ENCODE measurements at regions of chr11 and their contacts with region 1.

Region 1: GRCh38 chr11:119334174-119334930 is at the start of gene RNF26:
- DNase-seq: peak; percentile 94 to 97 (median 95)
- H3K4me3 ChIP-seq: peak within 1 kb of the TSS; percentile 80
- H3K27ac ChIP-seq: peak within 1 kb of the TSS; percentile 80 to 81
- H3K4me1 ChIP-seq: peaks cover 8% of the 10 kb centered on the region
- H3K27me3 ChIP-seq: no peaks in the 10 kb centered on the region
- CTCF ChIP-seq: no peak
- EP300 ChIP-seq: no peak
- POLR2A ChIP-seq: peak; percentile 77
- total RNA-seq, gene RNF26: 7.0 to 25.8 (median 22.0) TPM

Region 2: DNA sequence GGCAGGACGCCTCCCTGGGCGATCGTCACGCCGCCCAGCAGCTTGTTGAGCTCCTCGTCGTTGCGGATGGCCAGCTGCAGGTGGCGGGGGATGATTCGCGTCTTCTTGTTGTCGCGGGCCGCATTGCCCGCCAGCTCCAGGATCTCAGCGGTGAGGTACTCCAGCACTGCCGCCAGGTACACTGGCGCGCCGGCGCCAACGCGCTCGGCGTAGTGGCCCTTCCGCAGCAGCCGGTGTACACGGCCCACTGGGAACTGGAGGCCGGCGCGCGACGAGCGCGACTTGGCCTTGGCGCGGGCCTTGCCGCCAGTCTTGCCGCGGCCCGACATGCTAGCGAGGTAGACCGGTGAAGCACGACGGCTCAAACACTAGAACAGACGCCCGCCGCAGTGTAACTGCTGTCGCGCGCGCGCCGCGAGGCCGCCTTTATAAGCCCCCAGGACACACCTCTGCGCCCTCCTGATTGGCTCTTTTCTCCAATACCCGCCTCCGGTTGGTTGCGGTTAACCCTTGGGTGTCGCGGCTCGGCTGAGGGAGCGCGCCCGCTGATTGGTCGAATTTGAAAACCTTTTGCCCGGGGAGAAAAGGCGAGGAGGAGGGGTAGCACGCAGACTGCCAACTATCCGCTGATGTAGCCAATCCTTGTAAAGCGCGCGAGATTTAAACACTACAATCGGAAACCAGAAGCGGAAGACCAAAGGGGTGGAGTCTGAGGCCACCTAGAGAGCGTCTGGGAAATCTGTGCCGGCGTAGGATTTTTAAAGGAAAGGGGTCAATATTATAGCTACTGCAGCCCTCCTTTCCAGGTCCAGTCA is 239.1 kb before region 1 on chr11:
- intact Hi-C with region 1: loop called in 1 of 4 experiments (anchors 10 kb)
- DNase-seq: peak; percentile 98 to 99 (median 99)
- H3K4me3 ChIP-seq: peak overlapping the region; percentile 92
- H3K27ac ChIP-seq: peak overlapping the region; percentile 80 to 96
- H3K4me1 ChIP-seq: peaks cover 2% of the 10 kb centered on the region
- H3K27me3 ChIP-seq: no peaks in the 10 kb centered on the region
- CTCF ChIP-seq: peak in 2 of 3 donors; percentile 70 to 85
- EP300 ChIP-seq: no peak
- POLR2A ChIP-seq: peak; percentile 99

Region 3: DNA sequence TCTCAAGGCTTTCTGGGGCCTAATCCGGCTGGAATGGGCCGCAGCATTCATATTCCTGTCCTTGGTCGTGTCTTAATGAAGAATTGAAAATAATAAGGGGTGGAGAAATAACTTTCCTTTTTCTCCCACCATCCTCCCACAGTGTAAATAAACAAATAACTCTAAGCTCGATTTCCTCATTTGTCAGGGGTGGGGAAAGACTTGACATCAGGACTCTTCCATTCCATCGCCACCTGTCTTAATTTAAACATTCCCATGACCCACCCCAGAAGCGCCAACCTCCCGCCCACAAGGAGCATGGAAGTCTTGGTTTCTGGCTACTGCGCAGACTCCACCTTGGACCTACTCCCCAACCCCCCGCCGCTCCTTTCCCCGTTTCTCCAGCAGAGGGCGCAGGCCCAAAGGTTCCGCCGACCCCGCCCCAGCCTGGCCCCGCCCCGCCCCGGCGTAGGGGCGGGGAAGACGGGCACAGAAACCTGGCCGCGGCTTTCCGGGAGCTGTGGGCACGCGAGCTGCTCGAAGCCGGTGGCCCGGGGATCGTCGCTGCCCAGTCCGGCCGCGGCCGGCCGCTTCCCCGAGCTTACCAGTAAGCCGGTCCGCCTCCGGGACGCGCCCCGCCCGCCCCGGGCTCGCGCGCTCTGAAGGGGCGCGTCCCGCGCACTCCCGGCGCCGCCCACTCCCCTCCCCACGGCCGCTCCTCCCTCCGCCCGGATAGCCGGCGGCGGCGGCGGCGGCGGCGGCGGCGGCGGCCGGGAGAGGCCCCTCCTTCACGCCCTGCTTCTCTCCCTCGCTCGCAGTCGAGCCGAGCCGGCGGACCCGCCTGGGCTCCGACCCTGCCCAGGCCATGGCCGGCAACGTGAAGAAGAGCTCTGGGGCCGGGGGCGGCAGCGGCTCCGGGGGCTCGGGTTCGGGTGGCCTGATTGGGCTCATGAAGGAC is 128.5 kb before region 1 on chr11 and contains the start of gene CBL:
- intact Hi-C with region 1: loop called in 1 of 4 experiments (anchors 5 kb)
- DNase-seq: peak; percentile 93 to 98 (median 97)
- H3K4me3 ChIP-seq: peak within 1 kb of the TSS; percentile 85
- H3K27ac ChIP-seq: peak within 1 kb of the TSS; percentile 95 to 98
- H3K4me1 ChIP-seq: no peaks in the 10 kb centered on the region
- H3K27me3 ChIP-seq: no peaks in the 10 kb centered on the region
- CTCF ChIP-seq: peak; percentile 77 to 93 (median 84)
- EP300 ChIP-seq: no peak
- POLR2A ChIP-seq: peak; percentile 49
- total RNA-seq, gene CBL: 7.6 to 17.9 (median 13.4) TPM

Measured in ovary (tissue), 10 donors.